Endothelial cell of umbilical vein (primary cell): ENCODE measurements at regions of chr1 and their contacts with region 1.

Region 1: DNA sequence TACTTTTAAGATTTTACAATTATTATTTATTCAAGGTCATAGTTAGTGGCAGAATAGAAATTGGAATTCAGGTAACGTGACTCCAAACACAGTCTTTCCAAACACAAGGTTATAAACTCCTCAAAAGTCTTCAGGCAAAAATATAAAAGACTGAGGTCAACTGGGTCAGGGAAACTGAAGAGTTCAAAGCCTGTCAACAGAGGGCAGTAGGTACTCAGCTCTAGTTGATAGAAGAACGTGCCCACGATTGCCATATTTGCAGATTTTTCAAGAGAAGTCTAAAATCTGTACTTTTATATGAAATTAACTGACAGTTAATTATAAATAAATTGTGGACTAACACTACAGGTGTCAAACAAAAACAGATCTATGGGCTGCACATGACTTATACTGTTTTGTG is 135.0 kb downstream of the LHX4 start:
- DNase-seq: no peak
- H3K4me3 ChIP-seq: no peak overlapping the region
- H3K27ac ChIP-seq: no peak overlapping the region
- H3K4me1 ChIP-seq: peaks cover 9% of the 10 kb centered on the region
- H3K27me3 ChIP-seq: no peaks in the 10 kb centered on the region
- CTCF ChIP-seq: no peak
- POLR2A ChIP-seq: no peak

Region 2: GRCh38 chr1:180482425-180483275 is 117.6 kb after region 1 on chr1:
- CTCF ChIA-PET with region 1: no interaction called
- POLR2A ChIA-PET with region 1: no interaction called
- dilution Hi-C with region 1: no loop called
- intact Hi-C with region 1: loop called (anchors 5 kb)
- DNase-seq: peak; percentile 71
- H3K4me3 ChIP-seq: no peak overlapping the region
- H3K27ac ChIP-seq: no peak overlapping the region
- H3K4me1 ChIP-seq: peaks cover 5% of the 10 kb centered on the region
- H3K27me3 ChIP-seq: no peaks in the 10 kb centered on the region
- CTCF ChIP-seq: peak; percentile 50 to 60
- POLR2A ChIP-seq: no peak